CD8-positive, alpha-beta memory T cell (primary cell): ENCODE measurements at regions of chr16 and their contacts with region 1.

Region 1: GRCh38 chr16:27235055-27235937 is 32.0 kb downstream of the KDM8 start:
- DNase-seq: peak; percentile 85 to 97 (median 96)
- H3K4me3 ChIP-seq: peak overlapping the region; percentile 17
- H3K4me3 Mint-ChIP-seq: peak overlapping the region; percentile 49 to 90 (median 81)
- H3K27ac ChIP-seq: peak overlapping the region; percentile 83
- H3K27ac Mint-ChIP-seq: peak overlapping the region; percentile 97 to 100 (median 99)
- H3K4me1 ChIP-seq: peaks cover 97% of the 10 kb centered on the region
- H3K4me1 Mint-ChIP-seq: peaks cover 88 to 100% (median 95%) of the 10 kb centered on the region in 3 donors
- H3K27me3 ChIP-seq: no peaks in the 10 kb centered on the region
- H3K27me3 Mint-ChIP-seq: peaks cover 0 to 4% of the 10 kb centered on the region in 2 donors

Region 2: DNA sequence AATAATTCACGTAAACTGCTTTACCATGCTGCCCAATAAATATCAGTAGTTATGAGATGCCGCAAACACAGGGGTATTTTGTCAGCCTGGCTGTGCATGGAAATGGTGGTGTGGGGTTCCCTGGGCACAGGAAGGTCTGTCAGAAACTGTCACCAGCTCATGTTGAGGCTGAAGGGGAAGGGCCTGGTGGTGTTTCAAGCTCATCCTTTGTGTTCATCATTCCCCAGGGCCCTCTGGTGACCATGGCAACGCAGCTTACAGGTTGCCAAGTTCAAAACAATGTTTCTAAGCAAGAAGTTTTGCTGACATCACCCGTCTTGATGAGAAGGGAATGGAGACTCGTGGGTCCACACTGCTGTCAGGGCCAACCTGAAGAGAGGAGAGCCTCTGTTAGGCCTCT is 517.5 kb before region 1 on chr16:
- CTCF ChIA-PET with region 1: no interaction called
- POLR2A ChIA-PET with region 1: no interaction called
- DNase-seq: no peak
- H3K4me3 ChIP-seq: no peak overlapping the region
- H3K4me3 Mint-ChIP-seq: no peak overlapping the region
- H3K27ac ChIP-seq: no peak overlapping the region
- H3K27ac Mint-ChIP-seq: no peak overlapping the region
- H3K4me1 ChIP-seq: no peaks in the 10 kb centered on the region
- H3K4me1 Mint-ChIP-seq: no peaks in the 10 kb centered on the region
- H3K27me3 ChIP-seq: no peaks in the 10 kb centered on the region
- H3K27me3 Mint-ChIP-seq: peaks cover 0 to 9% of the 10 kb centered on the region in 2 donors

Region 3: GRCh38 chr16:27179500-27180072 is 55.7 kb before region 1 on chr16:
- CTCF ChIA-PET with region 1: interaction called, 40 read pairs
- POLR2A ChIA-PET with region 1: interaction called, 7 read pairs
- DNase-seq: peak; percentile 77 to 89 (median 77)
- H3K4me3 ChIP-seq: no peak overlapping the region
- H3K4me3 Mint-ChIP-seq: peak overlapping the region in 1 of 7 donors; percentile 64
- H3K27ac ChIP-seq: no peak overlapping the region
- H3K27ac Mint-ChIP-seq: peak overlapping the region in 7 of 8 donors; percentile 13 to 77 (median 56)
- H3K4me1 ChIP-seq: peaks cover 23% of the 10 kb centered on the region
- H3K4me1 Mint-ChIP-seq: peaks cover 17 to 28% (median 25%) of the 10 kb centered on the region in 3 donors
- H3K27me3 ChIP-seq: no peaks in the 10 kb centered on the region
- H3K27me3 Mint-ChIP-seq: peaks cover 0 to 2% of the 10 kb centered on the region in 2 donors

Region 4: GRCh38 chr16:27268376-27269299 is 33.3 kb after region 1 on chr16 and contains the start of gene NSMCE1:
- CTCF ChIA-PET with region 1: interaction called, 8 read pairs
- POLR2A ChIA-PET with region 1: interaction called, 16 read pairs
- DNase-seq: peak; percentile 88 to 97 (median 94)
- H3K4me3 ChIP-seq: peak within 1 kb of the TSS; percentile 97
- H3K4me3 Mint-ChIP-seq: peak within 1 kb of the TSS; percentile 90 to 100 (median 98)
- H3K27ac ChIP-seq: peak within 1 kb of the TSS; percentile 85
- H3K27ac Mint-ChIP-seq: peak within 1 kb of the TSS; percentile 94 to 100 (median 99)
- H3K4me1 ChIP-seq: peaks cover 45% of the 10 kb centered on the region
- H3K4me1 Mint-ChIP-seq: peaks cover 38 to 53% (median 53%) of the 10 kb centered on the region in 3 donors
- H3K27me3 ChIP-seq: no peaks in the 10 kb centered on the region
- H3K27me3 Mint-ChIP-seq: no peaks in the 10 kb centered on the region
- total RNA-seq, gene NSMCE1: 103 to 114 TPM

Region 5: DNA sequence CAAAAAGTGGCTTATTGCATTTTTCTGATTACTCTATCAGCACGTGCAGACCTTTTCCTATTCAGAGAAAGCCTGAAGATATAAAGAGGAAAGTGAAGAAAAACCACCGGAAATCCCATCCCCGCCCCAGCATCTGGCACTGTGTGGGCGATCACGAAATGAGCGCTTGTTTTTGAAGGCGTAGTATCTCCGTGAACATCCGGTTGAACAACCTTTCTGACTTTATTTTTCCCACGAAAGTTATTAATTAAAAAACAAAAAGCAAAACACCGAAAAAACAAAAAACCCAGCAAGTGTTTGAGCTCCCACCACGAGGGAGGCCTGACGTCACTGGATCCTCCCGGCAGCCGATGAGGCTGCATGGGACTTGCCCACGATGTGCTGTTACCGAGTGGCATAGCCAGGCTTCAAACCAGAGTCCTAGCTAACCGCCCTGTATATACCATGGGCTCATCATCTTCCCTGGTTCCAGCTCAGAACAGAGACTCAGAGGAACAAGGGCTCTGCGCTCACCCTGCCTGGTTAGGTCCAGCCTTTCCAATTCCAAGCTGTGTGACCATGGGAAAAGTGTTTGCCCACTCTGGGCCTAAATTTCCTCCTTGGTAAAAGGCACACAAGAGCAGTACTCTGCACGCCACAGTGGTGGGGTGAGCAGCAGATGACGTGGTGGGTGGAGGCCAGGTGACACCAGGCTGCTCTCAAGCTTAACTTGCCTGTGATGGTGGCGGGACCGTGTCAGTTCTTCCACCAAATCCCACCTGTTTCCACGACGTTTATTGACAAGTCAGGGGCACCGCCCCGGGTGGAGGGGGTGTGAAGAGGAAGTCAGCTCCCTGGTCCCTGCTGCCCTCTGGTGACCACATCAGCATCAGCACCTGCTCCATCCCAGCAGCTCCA is 132.4 kb after region 1 on chr16:
- CTCF ChIA-PET with region 1: interaction called, 66 read pairs
- POLR2A ChIA-PET with region 1: interaction called, 56 read pairs
- DNase-seq: peak; percentile 79 to 96 (median 92)
- H3K4me3 ChIP-seq: peak overlapping the region; percentile 23
- H3K4me3 Mint-ChIP-seq: peak overlapping the region; percentile 51 to 80 (median 72)
- H3K27ac ChIP-seq: peak overlapping the region; percentile 77
- H3K27ac Mint-ChIP-seq: peak overlapping the region; percentile 96 to 100 (median 99)
- H3K4me1 ChIP-seq: peaks cover 65% of the 10 kb centered on the region
- H3K4me1 Mint-ChIP-seq: peaks cover 33 to 71% (median 52%) of the 10 kb centered on the region in 3 donors
- H3K27me3 ChIP-seq: no peaks in the 10 kb centered on the region
- H3K27me3 Mint-ChIP-seq: no peaks in the 10 kb centered on the region

Region 6: GRCh38 chr16:27449434-27450195 is 214.3 kb after region 1 on chr16:
- CTCF ChIA-PET with region 1: interaction called, 29 read pairs
- POLR2A ChIA-PET with region 1: interaction called, 7 read pairs
- DNase-seq: peak; percentile 83 to 94 (median 87)
- H3K4me3 ChIP-seq: peak overlapping the region; percentile 0
- H3K4me3 Mint-ChIP-seq: peak overlapping the region; percentile 61 to 93 (median 88)
- H3K27ac ChIP-seq: peak overlapping the region; percentile 74
- H3K27ac Mint-ChIP-seq: peak overlapping the region; percentile 97 to 100 (median 100)
- H3K4me1 ChIP-seq: peaks cover 80% of the 10 kb centered on the region
- H3K4me1 Mint-ChIP-seq: peaks cover 85 to 92% (median 88%) of the 10 kb centered on the region in 3 donors
- H3K27me3 ChIP-seq: no peaks in the 10 kb centered on the region
- H3K27me3 Mint-ChIP-seq: peaks cover 0 to 9% of the 10 kb centered on the region in 2 donors

Region 7: DNA sequence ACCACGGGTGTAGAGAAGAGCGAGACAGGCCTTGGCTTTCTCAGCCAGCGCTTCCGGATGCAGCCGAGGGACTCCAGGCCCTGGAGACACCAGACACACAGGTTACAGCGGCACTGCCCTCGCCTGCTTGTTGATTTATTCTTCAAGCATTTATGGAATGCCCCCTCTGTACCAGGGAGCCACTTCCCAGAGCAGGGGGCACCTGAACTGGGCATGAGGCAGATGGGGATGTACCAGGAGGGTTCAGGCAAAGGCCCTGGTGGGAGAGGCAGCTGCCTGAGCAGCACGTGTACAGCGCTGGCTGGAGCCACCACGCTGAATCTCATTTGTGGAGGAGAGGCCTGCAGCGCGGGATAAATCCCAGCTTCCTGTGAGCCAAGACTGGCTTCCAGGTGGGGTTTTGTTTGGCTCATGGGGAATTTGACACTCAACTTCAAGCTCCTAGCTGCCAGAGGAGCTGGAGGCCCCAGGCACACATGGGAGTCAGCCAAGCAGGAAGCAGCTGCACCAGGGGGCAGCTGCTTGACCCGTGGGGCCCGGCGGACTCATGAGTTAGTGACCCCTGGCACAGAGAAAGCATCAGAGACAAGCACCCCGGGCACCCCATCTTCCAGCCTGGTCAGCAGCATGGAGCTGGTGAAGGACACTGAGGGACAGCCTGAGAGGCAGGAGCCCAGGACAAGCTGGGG is 226.3 kb after region 1 on chr16:
- CTCF ChIA-PET with region 1: interaction called, 20 read pairs
- POLR2A ChIA-PET with region 1: interaction called, 6 read pairs
- DNase-seq: no peak
- H3K4me3 ChIP-seq: no peak overlapping the region
- H3K4me3 Mint-ChIP-seq: peak overlapping the region in 6 of 7 donors; percentile 26 to 91 (median 45)
- H3K27ac ChIP-seq: no peak overlapping the region
- H3K27ac Mint-ChIP-seq: peak overlapping the region; percentile 53 to 99 (median 85)
- H3K4me1 ChIP-seq: peaks cover 74% of the 10 kb centered on the region
- H3K4me1 Mint-ChIP-seq: peaks cover 55 to 95% (median 61%) of the 10 kb centered on the region in 3 donors
- H3K27me3 ChIP-seq: no peaks in the 10 kb centered on the region
- H3K27me3 Mint-ChIP-seq: peaks cover 0 to 5% of the 10 kb centered on the region in 2 donors